ENCODE measurements at regions of chr5 and their contacts with region 1.

Region 1: GRCh38 chr5:78984439-78985115 is 533 bp downstream of the ARSB start:
- DNase-seq: peak; percentile 53 to 77
- ATAC-seq: peak; percentile 83 to 87
- H3K4me3 ChIP-seq: peak overlapping the region; percentile 68 to 91 (median 78)
- H3K27ac ChIP-seq: peak overlapping the region; percentile 82 to 92 (median 88)
- H3K4me1 ChIP-seq: peaks cover 11 to 16% of the 10 kb centered on the region in 2 donors
- H3K27me3 ChIP-seq: no peaks in the 10 kb centered on the region
- CTCF ChIP-seq: peak; percentile 20 to 50 (median 40)
- POLR2A ChIP-seq: peak; percentile 53 to 56

Region 2: GRCh38 chr5:78908173-78909061 is 76.2 kb before region 1 on chr5:
- in situ Hi-C with region 1: no loop called
- intact Hi-C with region 1: loop called (anchors 5 kb)
- DNase-seq: peak; percentile 45 to 56
- ATAC-seq: peak; percentile 82 to 90
- H3K4me3 ChIP-seq: peak overlapping the region; percentile 26 to 40 (median 36)
- H3K27ac ChIP-seq: peak overlapping the region; percentile 70 to 78 (median 72)
- H3K4me1 ChIP-seq: peaks cover 31 to 33% of the 10 kb centered on the region in 2 donors
- H3K27me3 ChIP-seq: no peaks in the 10 kb centered on the region
- CTCF ChIP-seq: no peak
- POLR2A ChIP-seq: no peak

Measured in gastrocnemius medialis (tissue), 4 donors.